A549 (cell line): ENCODE measurements at regions of chr10 and their contacts with region 1.

Region 1: GRCh38 chr10:32210306-32211045 is 136.5 kb downstream of the EPC1 start:
- DNase-seq: peak; percentile 75 to 78
- ATAC-seq: peak; percentile 94 to 97
- H3K4me3 ChIP-seq: no peak overlapping the region
- H3K27ac ChIP-seq: no peak overlapping the region
- H3K4me1 ChIP-seq: no peaks in the 10 kb centered on the region
- CTCF ChIP-seq: peak; percentile 60
- EP300 ChIP-seq: no peak
- POLR2A ChIP-seq: no peak
- RAD21 ChIP-seq: peak; percentile 68 to 76

Region 2: DNA sequence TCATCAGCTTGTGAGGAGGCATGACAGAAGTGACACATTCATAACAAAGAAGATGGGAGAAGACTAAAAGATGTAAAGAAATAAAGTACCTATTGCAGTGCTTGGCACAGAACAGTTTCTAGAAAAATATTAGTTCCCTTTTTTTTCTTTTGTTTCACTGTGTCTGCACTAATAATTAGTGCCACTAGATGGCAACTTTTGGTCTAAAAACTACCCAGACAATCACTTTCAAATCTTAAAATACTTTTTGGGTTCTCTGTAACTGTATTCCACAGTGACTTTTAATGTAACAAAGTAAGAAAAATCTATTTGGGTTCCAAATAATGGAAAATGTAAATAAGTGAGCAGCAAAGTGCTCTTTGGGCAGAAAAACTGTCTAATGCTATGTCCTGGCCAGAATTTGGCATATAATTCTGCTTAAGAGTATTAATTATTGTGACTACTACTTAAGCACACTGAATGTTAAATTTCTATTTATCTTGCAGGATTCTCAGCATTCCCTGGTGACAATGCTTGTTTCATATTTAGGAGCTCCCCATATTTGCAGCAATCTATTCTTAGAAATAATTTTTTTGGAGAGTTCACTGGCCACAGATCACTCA is 19.5 kb before region 1 on chr10:
- CTCF ChIA-PET with region 1: interaction called, 18 read pairs
- POLR2A ChIA-PET with region 1: no interaction called
- DNase-seq: peak in 1 of 2 experiments; percentile 42
- ATAC-seq: peak; percentile 50 to 69; a peak in 4 of 6 replicates
- H3K4me3 ChIP-seq: no peak overlapping the region
- H3K27ac ChIP-seq: no peak overlapping the region
- H3K4me1 ChIP-seq: peaks cover 15% of the 10 kb centered on the region; the same call in 2 of the 3 replicates
- CTCF ChIP-seq: peak; percentile 80
- EP300 ChIP-seq: no peak
- POLR2A ChIP-seq: no peak
- RAD21 ChIP-seq: peak; percentile 68 to 74

Region 3: DNA sequence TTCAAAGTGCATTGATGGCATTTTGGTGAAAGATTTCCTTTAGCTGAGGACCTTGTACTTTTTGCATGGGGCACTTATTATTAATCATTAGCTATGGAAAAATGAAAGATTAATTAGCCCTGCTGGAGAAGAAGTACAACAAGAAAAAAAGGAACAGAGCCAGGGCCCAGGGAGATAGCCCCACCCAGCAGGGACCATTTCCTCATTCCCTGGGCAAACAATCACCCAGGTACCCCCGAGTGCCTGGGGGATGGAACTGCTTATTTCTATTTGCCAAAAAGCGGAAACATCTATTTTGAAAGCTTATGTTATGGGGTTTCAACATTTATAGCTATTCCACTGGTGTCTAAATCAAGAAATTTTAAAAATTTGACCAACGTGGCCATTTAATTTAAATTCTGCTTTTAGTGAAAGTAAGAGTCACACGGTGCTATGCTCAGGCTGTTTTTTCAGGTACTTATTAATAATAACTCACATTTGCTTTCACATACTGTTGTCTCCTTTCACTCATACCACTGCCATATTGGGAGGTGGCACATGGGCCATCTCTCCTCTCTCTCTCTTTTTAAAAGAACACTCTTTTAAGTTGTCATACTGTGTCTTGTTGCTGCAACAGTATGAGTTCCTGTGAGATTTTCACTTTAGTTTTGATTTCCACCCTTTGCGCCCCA is 10.6 kb before region 1 on chr10:
- CTCF ChIA-PET with region 1: interaction called, 14 read pairs
- POLR2A ChIA-PET with region 1: no interaction called
- DNase-seq: no peak
- ATAC-seq: no peak
- H3K4me3 ChIP-seq: no peak overlapping the region
- H3K27ac ChIP-seq: no peak overlapping the region
- H3K4me1 ChIP-seq: no peaks in the 10 kb centered on the region
- CTCF ChIP-seq: no peak
- EP300 ChIP-seq: no peak
- POLR2A ChIP-seq: no peak
- RAD21 ChIP-seq: no peak